GM10248 (cell line): ENCODE measurements at regions of chr19 and their contacts with region 1.

Region 1: GRCh38 chr19:3821857-3822364 is 35.7 kb upstream of the MATK start:
- DNase-seq: peak; percentile 86
- CTCF ChIP-seq: peak; percentile 98

Region 2: GRCh38 chr19:3762501-3763459 is 59.1 kb before region 1 on chr19 and contains the start of gene MRPL54:
- CTCF ChIA-PET with region 1: interaction called, 19 read pairs
- POLR2A ChIA-PET with region 1: no interaction called
- DNase-seq: peak; percentile 99
- CTCF ChIP-seq: no peak

Region 3: DNA sequence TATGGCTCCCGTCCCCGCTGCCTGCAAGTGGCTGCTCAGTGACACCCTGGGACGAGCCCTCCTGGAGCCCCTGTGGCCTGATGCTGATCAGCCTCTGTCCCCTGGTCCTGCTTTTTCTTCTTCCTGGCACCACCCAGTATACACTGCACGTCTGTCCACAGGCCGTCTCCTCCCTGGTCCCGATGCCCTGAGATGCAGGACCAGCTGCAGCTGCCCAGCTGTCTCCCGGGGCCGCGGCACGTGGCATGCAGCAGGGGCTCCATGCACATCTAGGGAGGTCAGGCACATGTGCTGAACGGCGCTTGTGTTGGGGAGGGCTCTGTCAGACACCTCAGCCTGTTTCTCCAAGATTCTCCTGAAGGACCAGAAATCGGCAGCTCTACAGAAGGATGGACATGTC is 16.8 kb after region 1 on chr19:
- CTCF ChIA-PET with region 1: interaction called, 17 read pairs
- POLR2A ChIA-PET with region 1: no interaction called
- DNase-seq: no peak
- CTCF ChIP-seq: no peak